Motor neuron (in vitro differentiated cells): ENCODE measurements at regions of chr11 and their contacts with region 1.

Region 1: DNA sequence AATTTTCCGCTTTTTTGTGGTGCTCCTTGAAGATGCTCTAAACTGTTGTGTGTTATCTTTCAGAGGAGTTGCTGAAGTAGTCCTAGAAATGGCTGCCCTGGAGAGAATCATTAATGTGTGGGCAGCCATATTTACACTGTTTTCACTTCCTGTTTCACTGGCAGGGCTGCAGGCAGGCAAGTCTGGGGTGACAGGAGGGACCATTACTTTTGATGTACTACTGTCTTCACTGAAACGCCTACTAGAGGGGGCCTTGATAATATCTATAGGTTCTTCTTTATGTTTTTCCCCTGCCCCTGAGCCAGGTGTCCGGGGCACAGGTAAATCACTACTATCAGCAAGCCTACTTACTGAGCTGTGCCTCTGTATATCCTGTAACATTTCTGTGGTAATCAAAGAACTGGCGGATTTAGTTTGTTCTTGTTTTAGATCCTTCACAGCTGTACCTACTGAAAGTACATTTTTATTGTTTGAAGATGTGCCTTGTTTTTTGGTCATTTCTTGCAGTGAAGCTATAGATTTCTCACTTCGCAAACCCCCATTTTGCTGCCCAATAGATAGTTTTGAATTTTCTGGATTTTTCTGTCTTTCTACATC is 39.7 kb downstream of the ACAT1 start:
- ATAC-seq: no peak
- H3K4me3 ChIP-seq: no peak overlapping the region
- H3K27ac ChIP-seq: no peak overlapping the region
- H3K4me1 ChIP-seq: no peaks in the 10 kb centered on the region

Region 2: DNA sequence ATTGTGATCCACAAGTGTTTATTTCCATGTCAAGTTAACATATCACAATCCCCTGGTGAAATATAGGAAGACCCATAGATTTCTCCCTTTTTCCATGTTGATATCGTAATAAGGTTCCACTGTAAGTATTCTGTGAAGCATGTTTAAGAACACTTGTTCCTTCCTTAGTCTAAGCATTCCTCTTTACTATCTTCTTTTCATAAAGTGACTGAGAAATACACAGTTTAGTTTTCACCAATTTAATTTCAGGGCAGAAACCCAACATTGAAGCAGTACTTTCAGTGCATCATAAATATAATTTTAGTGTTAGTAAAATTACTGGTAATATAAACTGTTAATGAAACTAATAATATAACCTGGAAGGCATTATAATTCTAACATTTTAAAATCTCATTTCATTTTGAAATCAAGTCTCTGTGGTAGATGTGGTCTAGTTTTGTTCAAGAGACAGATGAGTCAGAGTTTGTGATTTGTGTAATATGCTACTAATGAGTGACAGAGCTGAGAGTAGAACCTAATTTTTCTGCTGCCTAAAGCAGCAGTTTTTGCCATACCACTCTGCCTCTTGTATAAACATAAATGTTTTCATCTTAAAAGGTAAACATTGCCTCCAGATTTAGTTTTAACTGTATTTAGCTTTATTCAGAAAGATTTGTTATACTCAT is 141.2 kb after region 1 on chr11:
- in situ Hi-C with region 1: loop called in 1 of 9 experiments (anchors 25 kb)
- ATAC-seq: peak in 1 of 8 experiments; percentile 25
- H3K4me3 ChIP-seq: no peak overlapping the region
- H3K27ac ChIP-seq: no peak overlapping the region
- H3K4me1 ChIP-seq: no peaks in the 10 kb centered on the region